Naive thymus-derived CD4-positive, alpha-beta T cell (primary cell): ENCODE measurements at regions of chr6 and their contacts with region 1.

Region 1: DNA sequence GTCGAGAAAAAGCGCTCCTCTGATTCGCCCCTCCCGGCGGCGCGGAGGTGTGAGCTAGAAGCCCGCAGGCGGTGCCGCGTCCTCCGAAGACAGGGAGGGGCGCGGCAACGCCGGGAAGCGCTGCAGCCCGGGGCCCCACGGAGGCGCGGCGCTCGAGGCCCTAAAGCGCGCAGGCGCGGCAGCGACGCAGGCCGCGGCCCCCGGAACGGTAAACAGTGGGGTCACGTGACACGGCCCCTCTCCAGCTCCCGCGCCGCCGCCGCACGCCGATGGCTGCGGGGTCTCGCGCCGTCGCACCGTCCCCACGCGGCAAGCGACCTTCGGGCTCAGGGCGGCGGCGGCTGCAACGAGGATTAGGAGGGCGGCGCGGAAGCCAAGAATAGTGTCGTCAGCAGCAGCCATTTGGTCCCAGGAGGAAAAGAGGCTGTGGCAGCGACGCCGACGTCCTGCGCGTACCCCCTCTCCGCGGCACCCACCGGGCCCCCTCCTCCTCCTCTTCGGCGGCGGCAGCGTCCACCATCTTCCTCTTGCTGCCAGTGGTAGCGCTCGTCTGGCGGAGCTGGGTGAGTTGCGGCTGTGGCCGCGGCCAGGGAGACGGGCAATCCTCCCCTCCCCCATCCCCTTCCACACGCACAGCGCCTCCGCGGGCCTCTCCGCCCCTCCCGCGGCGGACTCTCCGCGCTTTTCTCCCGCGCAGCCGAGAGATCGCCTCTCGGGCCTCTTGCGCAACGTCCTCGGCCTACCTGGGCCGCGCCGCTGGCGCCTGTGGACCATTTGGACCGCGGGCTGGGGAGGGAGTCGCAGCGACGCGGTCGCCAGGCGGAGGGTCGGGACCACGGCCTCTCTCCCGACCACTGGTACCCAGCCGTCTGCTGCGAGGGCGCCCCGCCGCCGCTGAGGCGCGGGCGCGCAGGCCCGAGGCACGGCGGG is at the start of gene PHF3:
- DNase-seq: peak; percentile 87 to 95 (median 92)
- ATAC-seq: peak; percentile 94
- H3K4me3 ChIP-seq: peak within 1 kb of the TSS; percentile 75
- H3K4me3 Mint-ChIP-seq: peak within 1 kb of the TSS; percentile 95 to 100 (median 100)
- H3K27ac ChIP-seq: peak within 1 kb of the TSS; percentile 98
- H3K27ac Mint-ChIP-seq: peak within 1 kb of the TSS; percentile 95 to 100 (median 98)
- H3K4me1 ChIP-seq: peaks cover 27 to 33% of the 10 kb centered on the region in 2 donors
- H3K4me1 Mint-ChIP-seq: peaks cover 34 to 66% (median 54%) of the 10 kb centered on the region in 7 donors
- H3K27me3 ChIP-seq: no peaks in the 10 kb centered on the region
- H3K27me3 Mint-ChIP-seq: peaks cover 0 to 5% (median 0%) of the 10 kb centered on the region in 5 donors
- total RNA-seq, gene PHF3: 56.8 to 141 (median 108) TPM

Region 2: DNA sequence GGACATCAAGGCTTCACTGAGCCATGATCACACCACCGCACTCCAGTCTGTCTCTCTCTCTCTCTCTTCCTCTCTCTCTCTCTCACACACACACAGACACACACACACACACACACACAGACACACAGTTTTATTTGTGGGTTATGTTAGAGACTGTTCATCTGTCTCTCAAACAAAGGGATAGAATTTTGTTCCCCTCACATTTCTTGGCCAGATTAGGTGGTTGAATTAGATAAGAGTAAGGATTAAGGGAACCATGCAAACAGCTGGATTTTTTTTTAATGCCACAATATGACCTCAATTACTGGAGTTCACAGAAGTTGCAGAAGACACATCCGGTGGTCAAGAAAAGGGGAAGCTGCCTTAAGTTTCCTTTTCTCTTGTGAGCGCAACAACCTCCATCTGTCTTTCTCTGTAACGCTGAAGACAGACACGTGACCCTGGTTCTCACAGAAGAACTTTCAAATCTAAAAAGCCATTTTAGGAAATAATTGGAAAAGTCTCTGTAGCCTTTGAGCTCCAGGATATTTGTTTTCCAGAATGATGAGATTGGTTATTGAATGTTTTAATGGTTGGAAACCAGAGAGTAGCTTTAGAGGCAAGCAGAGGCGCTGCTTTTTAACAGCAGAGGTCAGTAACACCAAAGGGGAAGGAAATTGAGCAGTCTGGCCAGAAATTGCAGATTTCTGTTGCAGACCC is 283.1 kb before region 1 on chr6:
- CTCF ChIA-PET with region 1: no interaction called
- POLR2A ChIA-PET with region 1: no interaction called
- intact Hi-C with region 1: loop called in 1 of 2 experiments (anchors 2 kb)
- DNase-seq: no peak
- ATAC-seq: peak; percentile 86
- H3K4me3 ChIP-seq: no peak overlapping the region
- H3K4me3 Mint-ChIP-seq: peak overlapping the region in 2 of 10 donors; percentile 22 to 66
- H3K27ac ChIP-seq: no peak overlapping the region
- H3K27ac Mint-ChIP-seq: peak overlapping the region in 2 of 9 donors; percentile 13 to 48
- H3K4me1 ChIP-seq: no peaks in the 10 kb centered on the region
- H3K4me1 Mint-ChIP-seq: peaks cover 0 to 15% (median 7%) of the 10 kb centered on the region in 7 donors
- H3K27me3 ChIP-seq: no peaks in the 10 kb centered on the region
- H3K27me3 Mint-ChIP-seq: peaks cover 10 to 27% (median 21%) of the 10 kb centered on the region in 5 donors

Region 3: DNA sequence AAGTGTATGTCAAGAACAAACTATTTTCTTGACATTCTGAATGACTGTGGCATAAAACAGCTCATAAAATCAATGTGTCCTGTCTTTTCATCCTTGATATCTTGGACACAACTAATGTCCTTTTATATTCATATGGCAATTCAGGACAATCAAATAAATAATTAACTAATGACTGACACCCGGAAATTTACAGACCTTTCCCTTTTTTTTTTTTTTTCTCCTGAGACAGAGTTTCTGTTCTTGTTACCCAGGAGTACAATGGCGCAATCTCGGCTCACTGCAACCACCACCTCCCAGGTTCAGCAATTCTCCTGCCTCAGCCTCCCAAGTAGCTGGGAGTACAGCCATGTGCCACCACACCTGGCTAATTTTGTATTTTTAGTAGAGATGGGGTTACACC is 209.0 kb before region 1 on chr6:
- CTCF ChIA-PET with region 1: no interaction called
- POLR2A ChIA-PET with region 1: no interaction called
- intact Hi-C with region 1: no loop called
- DNase-seq: no peak
- ATAC-seq: no peak
- H3K4me3 ChIP-seq: no peak overlapping the region
- H3K4me3 Mint-ChIP-seq: no peak overlapping the region
- H3K27ac ChIP-seq: no peak overlapping the region
- H3K27ac Mint-ChIP-seq: no peak overlapping the region
- H3K4me1 ChIP-seq: no peaks in the 10 kb centered on the region
- H3K4me1 Mint-ChIP-seq: no peaks in the 10 kb centered on the region
- H3K27me3 ChIP-seq: no peaks in the 10 kb centered on the region
- H3K27me3 Mint-ChIP-seq: peaks cover 2 to 19% (median 6%) of the 10 kb centered on the region in 5 donors

Region 4: GRCh38 chr6:63571881-63572732 is 63.7 kb before region 1 on chr6 and contains the starts of genes LOC128125822 and PTP4A1:
- CTCF ChIA-PET with region 1: interaction called, 15 read pairs
- POLR2A ChIA-PET with region 1: interaction called, 35 read pairs
- intact Hi-C with region 1: loop called (anchors 1 kb)
- DNase-seq: peak; percentile 92 to 98 (median 97)
- ATAC-seq: peak; percentile 90
- H3K4me3 ChIP-seq: peak within 1 kb of the TSS; percentile 91
- H3K4me3 Mint-ChIP-seq: peak within 1 kb of the TSS; percentile 87 to 96 (median 94)
- H3K27ac ChIP-seq: peak within 1 kb of the TSS; percentile 97
- H3K27ac Mint-ChIP-seq: peak within 1 kb of the TSS; percentile 89 to 100 (median 98)
- H3K4me1 ChIP-seq: peaks cover 10 to 16% of the 10 kb centered on the region in 2 donors
- H3K4me1 Mint-ChIP-seq: peaks cover 21 to 47% (median 40%) of the 10 kb centered on the region in 7 donors
- H3K27me3 ChIP-seq: no peaks in the 10 kb centered on the region
- H3K27me3 Mint-ChIP-seq: no peaks in the 10 kb centered on the region
- total RNA-seq, gene PTP4A1: 26.4 to 165 (median 73.8) TPM

Region 5: DNA sequence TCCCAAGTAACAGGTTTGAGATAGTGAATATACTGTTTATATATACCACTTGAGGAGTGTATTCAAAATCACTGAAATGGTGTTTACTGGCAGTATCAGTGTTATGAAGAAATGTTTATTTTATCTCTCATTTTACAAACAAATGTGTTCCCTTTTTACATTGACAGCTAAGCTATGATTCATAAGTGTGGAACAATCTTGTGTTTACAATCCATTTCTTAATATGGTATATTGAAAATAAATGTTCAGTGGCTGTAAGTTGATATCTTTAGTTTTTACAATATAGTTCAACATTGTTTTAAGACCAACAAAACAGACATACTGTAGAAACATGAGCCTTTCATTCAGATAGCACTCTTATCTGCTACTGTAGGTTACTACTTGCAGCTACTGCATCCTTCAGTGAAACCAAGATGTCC is 14.0 kb after region 1 on chr6:
- CTCF ChIA-PET with region 1: no interaction called
- POLR2A ChIA-PET with region 1: interaction called, 7 read pairs
- intact Hi-C with region 1: loop called (anchors 2 kb)
- DNase-seq: no peak
- ATAC-seq: no peak
- H3K4me3 ChIP-seq: no peak overlapping the region
- H3K4me3 Mint-ChIP-seq: peak overlapping the region in 5 of 10 donors; percentile 18 to 43 (median 39)
- H3K27ac ChIP-seq: no peak overlapping the region
- H3K27ac Mint-ChIP-seq: peak overlapping the region in 1 of 9 donors; percentile 19
- H3K4me1 ChIP-seq: peaks cover 29 to 44% of the 10 kb centered on the region in 2 donors
- H3K4me1 Mint-ChIP-seq: peaks cover 36 to 99% (median 82%) of the 10 kb centered on the region in 7 donors
- H3K27me3 ChIP-seq: no peaks in the 10 kb centered on the region
- H3K27me3 Mint-ChIP-seq: no peaks in the 10 kb centered on the region

Region 6: DNA sequence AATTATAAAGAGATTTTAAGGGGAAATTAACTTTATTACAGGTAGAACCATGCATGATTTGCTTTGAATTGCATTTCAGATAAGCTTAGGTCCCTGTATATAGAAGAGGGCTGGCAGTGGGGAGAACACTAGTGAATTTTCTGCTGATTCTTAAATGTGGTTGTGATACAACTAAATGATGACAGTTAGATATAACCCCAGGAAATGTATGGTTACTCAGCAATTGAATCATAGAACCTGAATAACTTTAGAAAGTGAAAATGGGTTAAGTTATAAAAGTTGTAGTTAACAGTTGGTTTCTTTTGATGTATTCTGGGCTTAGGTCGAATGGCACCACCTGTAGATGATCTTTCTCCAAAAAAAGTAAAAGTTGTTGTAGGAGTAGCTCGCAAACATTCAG is 69.9 kb after region 1 on chr6:
- CTCF ChIA-PET with region 1: no interaction called
- POLR2A ChIA-PET with region 1: no interaction called
- intact Hi-C with region 1: loop called (anchors 5 kb)
- DNase-seq: no peak
- ATAC-seq: no peak
- H3K4me3 ChIP-seq: no peak overlapping the region
- H3K4me3 Mint-ChIP-seq: no peak overlapping the region
- H3K27ac ChIP-seq: no peak overlapping the region
- H3K27ac Mint-ChIP-seq: peak overlapping the region in 2 of 9 donors; percentile 30 to 33
- H3K4me1 ChIP-seq: no peaks in the 10 kb centered on the region
- H3K4me1 Mint-ChIP-seq: peaks cover 5 to 20% (median 13%) of the 10 kb centered on the region in 7 donors
- H3K27me3 ChIP-seq: no peaks in the 10 kb centered on the region
- H3K27me3 Mint-ChIP-seq: no peaks in the 10 kb centered on the region

Region 7: DNA sequence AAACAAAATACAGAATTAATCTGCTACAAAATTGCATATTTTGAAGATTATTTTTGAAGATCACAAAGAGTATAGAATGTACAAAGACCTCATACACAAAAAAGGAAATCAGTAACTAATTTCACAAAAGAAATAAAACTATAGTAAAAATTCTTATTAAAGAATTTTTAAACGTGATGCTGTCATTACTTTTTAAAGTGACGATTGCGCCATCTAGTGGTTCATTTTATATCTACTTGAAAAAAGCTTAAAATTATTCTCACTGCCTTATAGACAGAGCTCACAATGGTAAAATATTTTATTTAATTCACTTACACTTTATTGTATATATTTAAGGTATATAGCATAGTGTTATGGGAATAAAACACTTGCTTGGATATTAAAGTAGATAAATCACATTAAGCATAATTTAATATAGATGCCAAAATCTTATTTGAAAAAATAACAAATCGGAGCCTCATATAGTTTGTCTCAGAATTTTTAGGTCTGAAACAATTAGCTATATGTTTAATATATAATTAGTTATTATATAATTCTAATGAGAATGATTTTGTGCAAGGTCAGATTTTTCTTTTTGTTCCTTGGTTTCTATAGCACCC is 128.6 kb after region 1 on chr6:
- CTCF ChIA-PET with region 1: interaction called, 3 read pairs
- POLR2A ChIA-PET with region 1: no interaction called
- intact Hi-C with region 1: loop called in 1 of 2 experiments (anchors 1 kb)
- DNase-seq: peak in 7 of 9 donors; percentile 10 to 52 (median 49)
- ATAC-seq: peak; percentile 50
- H3K4me3 ChIP-seq: no peak overlapping the region
- H3K4me3 Mint-ChIP-seq: no peak overlapping the region
- H3K27ac ChIP-seq: no peak overlapping the region
- H3K27ac Mint-ChIP-seq: no peak overlapping the region
- H3K4me1 ChIP-seq: no peaks in the 10 kb centered on the region
- H3K4me1 Mint-ChIP-seq: no peaks in the 10 kb centered on the region
- H3K27me3 ChIP-seq: no peaks in the 10 kb centered on the region
- H3K27me3 Mint-ChIP-seq: peaks cover 0 to 17% (median 5%) of the 10 kb centered on the region in 5 donors